ENCODE measurements at regions of chr11 and their contacts with region 1.

Region 1: DNA sequence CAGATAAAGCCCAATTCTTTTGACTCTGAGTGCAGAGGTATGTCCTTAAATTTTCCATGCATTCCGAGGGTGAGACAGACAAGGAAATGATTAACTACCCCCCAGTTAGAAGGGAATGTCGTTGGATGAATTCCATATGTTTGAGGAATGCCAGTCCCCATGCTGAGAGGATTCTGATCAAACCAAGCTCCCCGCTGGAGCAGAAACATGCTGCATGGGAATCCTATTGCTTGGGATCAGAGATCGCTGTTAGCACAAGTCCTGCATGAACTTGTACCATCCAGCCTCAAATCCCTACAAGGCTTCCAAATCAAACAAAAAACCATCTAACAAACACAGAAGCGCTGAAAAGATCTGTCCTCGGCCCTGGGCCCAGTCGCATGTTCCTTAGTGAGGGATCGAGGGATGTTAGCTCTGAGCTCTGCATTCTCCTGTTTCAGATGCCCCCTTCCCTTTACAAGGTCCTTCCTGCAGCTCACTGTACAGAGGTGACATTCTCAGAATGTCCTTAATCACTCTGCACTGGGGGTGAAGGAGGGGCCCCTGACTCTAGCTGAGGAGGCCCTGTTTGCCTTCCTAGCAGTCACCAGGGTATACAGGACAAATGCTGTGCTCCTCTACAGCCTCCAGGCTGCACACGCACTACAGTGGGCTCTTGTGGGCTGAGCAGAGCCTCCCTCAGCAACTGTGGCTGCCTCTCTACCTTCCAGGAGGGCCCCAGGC is 353.4 kb downstream of the TENM4 start:
- DNase-seq: no peak
- H3K4me3 ChIP-seq: no peak overlapping the region
- H3K27ac ChIP-seq: no peak overlapping the region
- H3K27me3 ChIP-seq: no peaks in the 10 kb centered on the region
- CTCF ChIP-seq: no peak

Region 2: DNA sequence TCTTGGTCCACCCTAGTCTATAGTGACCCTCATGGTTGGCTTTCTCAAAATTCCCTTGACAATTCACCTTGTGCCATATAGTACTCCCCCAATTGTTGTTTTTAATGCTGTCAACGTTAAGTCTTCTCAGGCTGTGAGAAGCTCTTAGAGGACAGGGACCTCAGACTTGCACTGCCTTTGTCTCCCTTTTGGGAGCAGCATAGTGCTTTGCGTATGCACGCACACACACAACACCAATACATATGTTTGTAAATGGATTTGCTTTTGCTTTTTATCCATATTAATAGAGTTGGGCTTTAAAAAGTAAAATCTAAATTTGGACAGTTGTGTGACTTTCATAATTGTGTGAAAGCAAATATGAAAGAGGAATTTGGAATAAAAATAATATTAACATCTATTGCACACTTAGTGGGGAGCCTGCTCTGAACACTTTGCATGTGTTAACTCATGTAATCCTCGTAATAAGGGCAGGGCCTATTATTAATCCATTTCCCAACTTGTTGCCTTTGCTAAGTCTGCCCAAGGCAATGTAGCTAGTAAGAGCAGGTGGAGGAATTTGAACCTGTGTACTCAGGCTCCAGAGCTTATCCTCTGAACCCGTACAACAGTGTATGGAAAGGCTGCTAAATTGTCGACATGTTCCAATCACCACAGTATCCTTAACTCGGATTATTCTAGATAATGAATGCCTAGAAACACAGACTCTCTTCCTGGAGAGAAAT is 255.0 kb before region 1 on chr11:
- intact Hi-C with region 1: loop called in 1 of 2 experiments (anchors 10 kb)
- DNase-seq: no peak
- H3K4me3 ChIP-seq: no peak overlapping the region
- H3K27ac ChIP-seq: peak overlapping the region in 7 of 59 donors; percentile 12 to 67 (median 55)
- H3K27me3 ChIP-seq: no peaks in the 10 kb centered on the region
- CTCF ChIP-seq: peak in 33 of 56 donors; percentile 9 to 56 (median 28)

Region 3: GRCh38 chr11:79259402-79260199 is 172.2 kb after region 1 on chr11:
- intact Hi-C with region 1: loop called in 1 of 2 experiments (anchors 10 kb)
- DNase-seq: no peak
- H3K4me3 ChIP-seq: no peak overlapping the region
- H3K27ac ChIP-seq: no peak overlapping the region
- H3K27me3 ChIP-seq: no peaks in the 10 kb centered on the region
- CTCF ChIP-seq: peak in 3 of 56 donors; percentile 12 to 20 (median 13)

Measured in dorsolateral prefrontal cortex (tissue), 120 donors.